ENCODE measurements at regions of chr7 and their contacts with region 1.

Region 1: GRCh38 chr7:30789334-30789711 is 18.1 kb downstream of the MINDY4 start:
- DNase-seq: peak; percentile 68
- ATAC-seq: peak; percentile 100
- H3K4me3 ChIP-seq: no peak overlapping the region
- H3K27ac ChIP-seq: no peak overlapping the region
- H3K4me1 ChIP-seq: peaks cover 13% of the 10 kb centered on the region; the same call in 1 of the 2 replicates
- H3K27me3 ChIP-seq: no peaks in the 10 kb centered on the region
- CTCF ChIP-seq: no peak

Region 2: GRCh38 chr7:31098642-31099360 is 309.5 kb after region 1 on chr7:
- CTCF ChIA-PET with region 1: interaction called, 14 read pairs
- POLR2A ChIA-PET with region 1: no interaction called
- intact Hi-C with region 1: no loop called
- DNase-seq: no peak
- ATAC-seq: no peak
- H3K4me3 ChIP-seq: no peak overlapping the region
- H3K27ac ChIP-seq: no peak overlapping the region
- H3K4me1 ChIP-seq: peaks cover 5% of the 10 kb centered on the region; the same call in 1 of the 2 replicates
- H3K27me3 ChIP-seq: peaks cover 47% of the 10 kb centered on the region
- CTCF ChIP-seq: no peak